Panc1 (cell line): ENCODE measurements at regions of chr15 and their contacts with region 1.

Region 1: GRCh38 chr15:98612490-98613110 is 35.7 kb upstream of the IGF1R start:
- DNase-seq: no peak
- ATAC-seq: no peak
- H3K4me3 ChIP-seq: no peak overlapping the region
- H3K27ac ChIP-seq: peak overlapping the region; percentile 62; the same call in 1 of the 2 replicates
- H3K4me1 ChIP-seq: peaks cover 28% of the 10 kb centered on the region
- H3K27me3 ChIP-seq: no peaks in the 10 kb centered on the region
- CTCF ChIP-seq: no peak

Region 2: GRCh38 chr15:98085003-98085639 is 527.5 kb before region 1 on chr15:
- CTCF ChIA-PET with region 1: no interaction called
- POLR2A ChIA-PET with region 1: no interaction called
- in situ Hi-C with region 1: no loop called
- intact Hi-C with region 1: no loop called
- DNase-seq: peak; percentile 36
- ATAC-seq: no peak
- H3K4me3 ChIP-seq: no peak overlapping the region
- H3K27ac ChIP-seq: no peak overlapping the region
- H3K4me1 ChIP-seq: no peaks in the 10 kb centered on the region
- H3K27me3 ChIP-seq: no peaks in the 10 kb centered on the region
- CTCF ChIP-seq: peak; percentile 64; the same call in 1 of the 2 replicates

Region 3: DNA sequence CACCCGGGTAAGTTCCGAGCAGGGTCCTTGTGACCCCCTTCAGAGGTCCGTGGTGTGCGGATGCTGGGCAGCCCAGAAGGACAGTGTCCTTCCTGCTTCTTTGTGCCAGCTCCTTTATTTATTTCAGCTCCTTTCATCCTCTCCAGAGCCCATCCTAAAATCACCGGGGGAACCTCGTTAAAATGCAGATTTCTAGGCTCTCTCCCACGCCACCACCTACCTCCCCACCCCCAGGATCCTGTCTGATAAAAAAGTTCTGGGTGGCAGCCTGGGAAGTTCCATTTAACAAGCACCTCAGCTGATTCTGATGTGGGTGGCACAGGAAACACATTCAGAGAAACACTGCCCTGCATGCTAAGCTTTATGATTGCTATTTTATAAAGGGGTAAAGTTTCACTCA is 23.2 kb after region 1 on chr15:
- CTCF ChIA-PET with region 1: no interaction called
- POLR2A ChIA-PET with region 1: interaction called, 12 read pairs
- in situ Hi-C with region 1: no loop called
- intact Hi-C with region 1: no loop called
- DNase-seq: no peak
- ATAC-seq: no peak
- H3K4me3 ChIP-seq: no peak overlapping the region
- H3K27ac ChIP-seq: no peak overlapping the region
- H3K4me1 ChIP-seq: no peaks in the 10 kb centered on the region
- H3K27me3 ChIP-seq: no peaks in the 10 kb centered on the region
- CTCF ChIP-seq: no peak